Endothelial cell of umbilical vein (primary cell): ENCODE measurements at regions of chr6 and their contacts with region 1.

Region 1: GRCh38 chr6:133817460-133818047 is 71.4 kb upstream of the TCF21 start:
- DNase-seq: no peak
- H3K4me3 ChIP-seq: no peak overlapping the region
- H3K27ac ChIP-seq: no peak overlapping the region
- H3K4me1 ChIP-seq: no peaks in the 10 kb centered on the region
- H3K27me3 ChIP-seq: no peaks in the 10 kb centered on the region
- CTCF ChIP-seq: peak; percentile 59 to 74
- POLR2A ChIP-seq: no peak

Region 2: GRCh38 chr6:133568970-133569889 is 248.3 kb before region 1 on chr6:
- CTCF ChIA-PET with region 1: interaction called, 10 read pairs
- POLR2A ChIA-PET with region 1: no interaction called
- dilution Hi-C with region 1: no loop called
- intact Hi-C with region 1: loop called (anchors 1 kb)
- DNase-seq: peak; percentile 56
- H3K4me3 ChIP-seq: peak overlapping the region in 2 of 3 experiments; percentile 29 to 49
- H3K27ac ChIP-seq: no peak overlapping the region
- H3K4me1 ChIP-seq: peaks cover 5% of the 10 kb centered on the region
- H3K27me3 ChIP-seq: peaks cover 3 to 6% of the 10 kb centered on the region in 2 experiments
- CTCF ChIP-seq: peak; percentile 67 to 74
- POLR2A ChIP-seq: no peak

Region 3: DNA sequence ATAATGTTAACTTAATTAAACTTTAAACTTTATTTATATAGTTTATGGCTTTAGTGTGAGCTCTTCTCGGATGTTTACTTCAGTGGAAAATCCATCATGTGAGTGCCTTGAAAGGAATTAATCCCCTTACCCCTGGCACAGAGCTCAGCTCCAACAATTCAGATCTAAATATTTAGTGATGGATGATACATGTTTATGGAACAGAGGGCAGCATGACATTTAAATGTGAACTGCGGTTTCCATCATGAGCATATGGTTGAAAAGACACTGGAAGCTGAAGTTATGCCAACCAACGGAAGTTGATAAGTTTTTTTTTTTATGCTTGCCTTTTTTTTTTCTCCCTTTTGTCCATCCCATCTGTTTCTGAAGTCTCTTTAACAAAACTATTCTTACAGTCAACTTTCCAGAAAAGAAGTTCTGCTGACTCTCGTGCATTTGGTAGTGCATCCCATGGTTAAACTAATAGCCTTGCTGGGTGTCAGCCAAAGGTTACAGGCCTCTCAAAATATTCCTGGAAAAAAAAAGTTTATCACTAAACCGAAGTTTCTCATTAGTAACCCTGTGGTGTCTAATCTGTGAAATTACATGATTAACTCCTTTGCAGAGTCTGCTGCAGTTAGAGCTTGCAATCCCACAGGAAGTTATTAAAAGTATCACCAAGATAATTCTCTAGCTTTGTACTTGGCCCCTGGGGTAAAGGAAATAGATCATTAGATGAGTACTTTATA is 172.5 kb before region 1 on chr6:
- CTCF ChIA-PET with region 1: no interaction called
- POLR2A ChIA-PET with region 1: no interaction called
- dilution Hi-C with region 1: no loop called
- intact Hi-C with region 1: no loop called
- DNase-seq: no peak
- H3K4me3 ChIP-seq: no peak overlapping the region
- H3K27ac ChIP-seq: no peak overlapping the region
- H3K4me1 ChIP-seq: no peaks in the 10 kb centered on the region
- H3K27me3 ChIP-seq: no peaks in the 10 kb centered on the region
- CTCF ChIP-seq: no peak
- POLR2A ChIP-seq: no peak

Region 4: DNA sequence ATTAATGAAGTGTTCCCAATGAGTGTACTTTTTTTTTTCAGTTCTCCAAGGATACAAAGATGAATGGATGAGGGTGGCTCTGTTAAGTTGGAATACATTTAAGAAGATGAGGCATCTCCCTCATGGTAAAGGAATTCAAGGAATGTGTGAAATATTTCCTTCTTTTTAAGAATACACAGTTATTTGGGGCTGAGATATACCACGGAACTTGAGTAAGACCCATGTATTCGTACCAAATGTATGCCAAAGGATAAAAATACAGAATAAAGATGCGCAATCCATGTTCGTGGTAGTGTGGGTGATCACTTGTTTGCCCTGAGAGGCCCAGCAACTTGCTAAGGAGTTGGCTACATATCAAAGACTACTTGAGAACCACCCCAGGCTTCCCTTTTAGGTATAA is 92.8 kb before region 1 on chr6:
- CTCF ChIA-PET with region 1: no interaction called
- POLR2A ChIA-PET with region 1: no interaction called
- dilution Hi-C with region 1: no loop called
- intact Hi-C with region 1: no loop called
- DNase-seq: no peak
- H3K4me3 ChIP-seq: no peak overlapping the region
- H3K27ac ChIP-seq: no peak overlapping the region
- H3K4me1 ChIP-seq: no peaks in the 10 kb centered on the region
- H3K27me3 ChIP-seq: no peaks in the 10 kb centered on the region
- CTCF ChIP-seq: no peak
- POLR2A ChIP-seq: no peak

Region 5: GRCh38 chr6:133787859-133788505 is 29.6 kb before region 1 on chr6:
- CTCF ChIA-PET with region 1: no interaction called
- POLR2A ChIA-PET with region 1: no interaction called
- dilution Hi-C with region 1: no loop called
- intact Hi-C with region 1: no loop called
- DNase-seq: no peak
- H3K4me3 ChIP-seq: no peak overlapping the region
- H3K27ac ChIP-seq: no peak overlapping the region
- H3K4me1 ChIP-seq: no peaks in the 10 kb centered on the region
- H3K27me3 ChIP-seq: no peaks in the 10 kb centered on the region
- CTCF ChIP-seq: no peak
- POLR2A ChIP-seq: no peak